ENCODE measurements at regions of chr5 and their contacts with region 1.

Region 1: DNA sequence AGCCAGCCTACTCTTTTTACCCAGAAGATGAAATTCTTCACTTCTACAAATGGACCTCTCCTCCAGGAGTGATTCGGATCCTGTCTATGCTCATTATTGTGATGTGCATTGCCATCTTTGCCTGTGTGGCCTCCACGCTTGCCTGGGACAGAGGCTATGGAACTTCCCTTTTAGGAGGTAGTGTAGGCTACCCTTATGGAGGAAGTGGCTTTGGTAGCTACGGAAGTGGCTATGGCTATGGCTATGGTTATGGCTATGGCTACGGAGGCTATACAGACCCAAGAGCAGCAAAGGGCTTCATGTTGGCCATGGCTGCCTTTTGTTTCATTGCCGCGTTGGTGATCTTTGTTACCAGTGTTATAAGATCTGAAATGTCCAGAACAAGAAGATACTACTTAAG is 16.6 kb downstream of the OCLN start:
- DNase-seq: no peak
- ATAC-seq: no peak
- H3K4me3 ChIP-seq: no peak overlapping the region
- H3K4me3 Mint-ChIP-seq: no peak overlapping the region
- H3K27ac ChIP-seq: no peak overlapping the region
- H3K27ac Mint-ChIP-seq: no peak overlapping the region
- H3K4me1 ChIP-seq: no peaks in the 10 kb centered on the region
- H3K4me1 Mint-ChIP-seq: no peaks in the 10 kb centered on the region
- H3K27me3 ChIP-seq: no peaks in the 10 kb centered on the region
- H3K27me3 Mint-ChIP-seq: peaks cover 2% of the 10 kb centered on the region
- CTCF ChIP-seq: no peak

Region 2: GRCh38 chr5:68818057-68818695 is 691.0 kb before region 1 on chr5:
- CTCF ChIA-PET with region 1: no interaction called
- POLR2A ChIA-PET with region 1: no interaction called
- intact Hi-C with region 1: loop called in 1 of 2 experiments (anchors 5 kb)
- DNase-seq: no peak
- ATAC-seq: no peak
- H3K4me3 ChIP-seq: no peak overlapping the region
- H3K4me3 Mint-ChIP-seq: no peak overlapping the region
- H3K27ac ChIP-seq: no peak overlapping the region
- H3K27ac Mint-ChIP-seq: no peak overlapping the region
- H3K4me1 ChIP-seq: no peaks in the 10 kb centered on the region
- H3K4me1 Mint-ChIP-seq: no peaks in the 10 kb centered on the region
- H3K27me3 ChIP-seq: no peaks in the 10 kb centered on the region
- H3K27me3 Mint-ChIP-seq: peaks cover 2% of the 10 kb centered on the region
- CTCF ChIP-seq: no peak